ENCODE measurements at regions of chr3 and their contacts with region 1.

Region 1: DNA sequence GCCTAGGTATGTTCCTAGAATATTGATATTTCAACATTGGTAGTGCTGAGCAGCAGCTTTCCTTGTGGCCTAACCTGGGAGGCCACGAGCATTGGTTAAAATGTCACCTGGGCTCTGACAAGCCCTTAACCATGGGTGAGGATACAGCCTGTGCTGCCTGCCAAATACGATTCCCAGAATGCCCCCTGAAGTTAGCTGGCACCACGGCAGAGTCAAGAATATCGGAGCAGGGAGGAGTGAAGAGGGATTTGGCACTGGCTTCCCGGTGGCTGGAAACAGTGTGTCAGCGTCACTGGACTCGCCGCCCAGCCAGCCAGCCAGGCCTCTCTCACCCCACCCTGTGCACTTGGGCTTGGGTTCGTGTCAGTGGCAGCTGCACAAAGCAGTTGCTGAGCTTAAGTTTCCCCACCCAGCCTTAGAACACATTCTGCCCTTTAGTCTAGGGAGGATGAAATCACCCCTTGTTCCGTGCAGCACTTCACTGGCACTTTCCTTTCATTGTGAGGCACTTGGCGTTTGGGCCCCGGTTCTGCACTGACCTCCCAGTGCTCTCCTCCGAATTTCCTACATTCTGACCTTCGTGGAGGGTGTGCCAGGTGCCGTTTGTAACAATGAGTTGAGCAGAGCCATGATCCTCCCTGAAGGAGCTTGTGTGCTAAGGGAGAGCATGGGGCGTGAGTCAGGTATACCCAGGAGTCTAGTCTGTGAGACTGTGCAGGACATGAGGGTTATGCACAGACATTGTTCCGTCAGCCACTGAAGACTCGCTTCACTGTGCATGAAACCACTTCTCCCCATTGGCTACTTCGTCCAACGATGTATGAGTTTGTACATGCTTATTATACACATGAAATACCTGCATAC is 152.8 kb upstream of the BHLHE40 start:
- DNase-seq: no peak
- H3K4me3 Mint-ChIP-seq: peak overlapping the region; percentile 83
- H3K27ac Mint-ChIP-seq: peak overlapping the region; percentile 93
- H3K4me1 Mint-ChIP-seq: peaks cover 94% of the 10 kb centered on the region
- H3K27me3 Mint-ChIP-seq: no peaks in the 10 kb centered on the region

Region 2: DNA sequence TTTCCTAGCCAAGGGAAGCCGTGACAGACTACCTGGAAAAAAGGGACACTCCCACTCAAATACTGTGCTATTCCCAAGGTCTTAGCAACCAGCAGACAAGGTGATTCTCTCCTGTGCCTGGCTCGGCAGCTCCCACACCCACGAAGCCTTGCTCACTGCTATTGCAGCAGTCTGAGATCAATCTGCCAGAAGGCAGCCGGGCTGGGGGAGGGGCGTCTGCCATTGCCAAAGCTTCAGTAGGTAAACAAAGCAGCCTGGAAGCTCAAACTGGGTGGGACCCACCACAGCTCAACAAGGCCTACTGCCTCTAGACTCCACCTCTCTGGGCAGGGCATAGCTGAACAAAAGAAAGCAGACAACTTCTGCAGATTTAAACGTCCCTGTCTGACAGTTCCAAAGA is 651.7 kb before region 1 on chr3:
- CTCF ChIA-PET with region 1: no interaction called
- POLR2A ChIA-PET with region 1: no interaction called
- DNase-seq: no peak
- H3K4me3 Mint-ChIP-seq: no peak overlapping the region
- H3K27ac Mint-ChIP-seq: no peak overlapping the region
- H3K4me1 Mint-ChIP-seq: no peaks in the 10 kb centered on the region
- H3K27me3 Mint-ChIP-seq: no peaks in the 10 kb centered on the region

Region 3: DNA sequence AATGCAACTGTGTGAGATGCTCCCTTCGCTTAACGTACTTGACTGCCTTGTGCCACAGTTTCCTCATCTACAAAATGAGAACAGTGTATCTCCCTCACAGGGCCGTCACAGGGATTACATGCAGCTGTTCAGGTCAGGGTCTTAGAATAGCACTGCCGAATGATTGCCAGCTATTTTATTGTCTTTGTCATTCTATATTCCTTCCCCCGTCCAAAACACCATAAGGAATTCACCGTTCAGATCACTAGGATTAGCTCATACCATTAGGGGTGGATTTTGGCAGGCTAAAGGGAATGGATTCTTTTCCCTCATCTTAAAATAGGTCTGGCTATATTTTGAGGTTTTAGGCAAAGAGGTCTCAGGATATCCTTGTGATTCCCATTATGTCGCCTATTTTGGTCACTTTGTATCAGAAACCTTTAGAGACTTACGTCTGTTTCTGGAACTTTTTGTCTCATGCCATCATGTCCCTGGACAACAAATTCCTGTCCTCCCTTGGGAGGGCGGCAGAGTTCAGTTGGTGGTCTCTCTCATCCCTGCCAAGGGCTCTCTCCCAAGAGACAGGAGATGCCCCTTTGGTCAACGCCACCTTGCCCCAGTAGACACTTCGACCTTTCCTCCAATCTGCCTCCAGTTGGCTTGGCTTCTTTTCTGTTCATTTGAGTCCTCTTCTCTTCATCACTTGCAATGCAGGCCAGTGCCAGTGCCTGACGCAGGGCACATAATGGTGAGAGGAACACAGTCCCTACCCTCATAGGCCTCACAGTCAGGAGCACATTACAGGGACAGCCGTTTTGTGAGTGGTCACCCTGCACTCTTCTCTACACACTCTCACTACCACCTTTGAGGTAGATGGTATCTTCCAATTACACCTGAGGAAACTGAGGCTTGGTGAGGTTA is 18.8 kb before region 1 on chr3:
- CTCF ChIA-PET with region 1: interaction called, 7 read pairs
- POLR2A ChIA-PET with region 1: interaction called, 33 read pairs
- DNase-seq: no peak
- H3K4me3 Mint-ChIP-seq: peak overlapping the region; percentile 21
- H3K27ac Mint-ChIP-seq: peak overlapping the region; percentile 26
- H3K4me1 Mint-ChIP-seq: peaks cover 72% of the 10 kb centered on the region
- H3K27me3 Mint-ChIP-seq: no peaks in the 10 kb centered on the region

Region 4: GRCh38 chr3:4841776-4842440 is 15.4 kb after region 1 on chr3:
- CTCF ChIA-PET with region 1: interaction called, 34 read pairs
- POLR2A ChIA-PET with region 1: interaction called, 455 read pairs
- DNase-seq: no peak
- H3K4me3 Mint-ChIP-seq: peak overlapping the region; percentile 40
- H3K27ac Mint-ChIP-seq: peak overlapping the region; percentile 90
- H3K4me1 Mint-ChIP-seq: peaks cover 89% of the 10 kb centered on the region
- H3K27me3 Mint-ChIP-seq: no peaks in the 10 kb centered on the region

Region 5: GRCh38 chr3:4850211-4850927 is 23.9 kb after region 1 on chr3:
- CTCF ChIA-PET with region 1: interaction called, 8 read pairs
- POLR2A ChIA-PET with region 1: interaction called, 455 read pairs
- DNase-seq: peak; percentile 69
- H3K4me3 Mint-ChIP-seq: peak overlapping the region; percentile 38
- H3K27ac Mint-ChIP-seq: peak overlapping the region; percentile 94
- H3K4me1 Mint-ChIP-seq: peaks cover 90% of the 10 kb centered on the region
- H3K27me3 Mint-ChIP-seq: no peaks in the 10 kb centered on the region

Region 6: DNA sequence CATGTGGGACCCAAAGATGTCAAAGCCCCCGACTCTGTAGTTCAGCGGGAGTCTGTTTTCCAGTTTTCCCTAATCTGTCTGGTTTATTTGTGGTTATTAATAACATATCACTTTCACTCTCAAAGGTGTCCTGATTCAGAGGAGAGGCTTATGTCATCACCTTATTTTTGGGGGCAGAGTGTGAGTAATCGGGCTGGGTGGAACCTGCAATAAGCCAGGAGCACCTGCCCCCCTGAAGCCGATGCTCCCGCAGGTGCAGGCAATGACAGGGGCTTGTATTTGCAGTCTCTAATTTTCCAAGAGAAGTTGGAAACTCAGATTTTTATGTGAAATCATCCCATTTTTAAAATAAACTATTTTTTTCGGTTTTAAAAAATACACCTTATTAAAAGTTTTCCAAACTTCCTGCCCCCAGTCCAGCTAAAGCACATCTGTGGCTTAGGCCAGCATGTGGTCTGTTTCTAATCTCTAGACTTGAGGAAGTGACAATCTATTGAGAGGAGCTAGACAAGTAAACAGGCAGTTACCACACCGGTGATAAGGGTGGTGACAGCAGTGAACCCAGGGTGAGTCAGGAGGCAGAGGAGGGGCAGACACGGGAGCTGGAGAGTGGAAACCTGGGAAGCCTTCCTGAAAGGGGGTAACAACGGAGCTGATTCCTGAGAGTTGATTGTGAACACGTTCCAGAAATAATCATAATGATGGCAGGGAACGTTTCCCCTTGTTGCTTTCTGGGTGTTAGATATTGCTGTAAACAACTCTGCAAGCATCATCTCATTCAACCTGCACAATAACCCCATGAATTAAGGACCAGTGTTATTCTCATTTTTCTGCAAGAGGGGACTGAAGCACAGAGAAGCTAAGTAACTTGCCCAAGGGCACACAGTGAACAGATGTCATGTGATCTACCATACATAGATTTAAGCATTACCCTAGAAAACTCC is 190.0 kb after region 1 on chr3:
- CTCF ChIA-PET with region 1: no interaction called
- POLR2A ChIA-PET with region 1: interaction called, 10 read pairs
- DNase-seq: peak; percentile 73
- H3K4me3 Mint-ChIP-seq: no peak overlapping the region
- H3K27ac Mint-ChIP-seq: peak overlapping the region; percentile 87
- H3K4me1 Mint-ChIP-seq: peaks cover 95% of the 10 kb centered on the region
- H3K27me3 Mint-ChIP-seq: no peaks in the 10 kb centered on the region